ENCODE measurements at regions of chr7 and their contacts with region 1.

Region 1: DNA sequence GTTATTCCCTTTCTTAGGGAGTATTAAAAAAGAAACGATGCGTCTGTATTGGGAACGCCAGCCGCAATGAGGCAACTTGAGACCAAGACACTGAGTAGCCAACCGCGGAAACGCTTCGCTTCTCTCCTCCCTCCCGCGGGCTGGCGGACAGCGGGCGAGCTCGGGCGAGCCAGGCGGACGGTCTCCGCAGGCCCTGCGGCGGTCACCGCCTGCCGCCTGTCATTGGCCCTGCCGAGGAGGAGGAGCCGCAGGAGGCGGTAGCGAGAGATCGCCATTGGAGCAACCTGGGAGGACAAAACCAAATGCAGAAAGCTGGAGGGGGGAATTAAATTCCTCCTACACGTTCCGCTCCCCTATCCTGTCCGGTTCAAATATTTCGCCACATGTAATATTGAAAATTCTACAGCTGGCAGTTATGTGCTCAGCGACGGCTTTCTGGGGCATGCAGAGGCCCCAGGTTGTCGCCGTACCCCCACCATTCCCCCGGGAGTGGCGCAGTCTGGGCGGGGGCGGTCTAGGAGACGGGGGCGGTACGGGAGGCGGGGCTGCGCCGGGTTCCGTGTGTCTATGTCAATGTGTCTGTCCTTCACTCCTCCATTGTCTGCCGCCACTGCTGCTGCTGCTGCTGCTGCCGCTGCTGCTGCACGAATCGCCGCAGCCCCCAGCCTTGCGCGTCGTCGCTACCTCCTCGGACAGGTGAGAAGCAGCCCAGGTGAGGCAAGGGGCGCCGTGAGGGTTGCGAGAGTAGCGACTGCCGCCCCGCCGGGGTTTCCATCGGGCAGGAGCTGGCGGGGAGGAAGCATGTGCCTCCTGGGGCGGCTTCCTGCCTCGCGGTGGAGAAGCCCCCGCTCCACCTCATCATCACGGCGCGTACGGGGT is at the starts of genes ANKMY2 and BZW2:
- DNase-seq: peak; percentile 89 to 96 (median 94)
- H3K4me3 ChIP-seq: peak within 1 kb of the TSS; percentile 58 to 100 (median 94)
- H3K27ac ChIP-seq: peak within 1 kb of the TSS; percentile 86 to 100 (median 97)
- H3K27me3 ChIP-seq: no peaks in the 10 kb centered on the region
- CTCF ChIP-seq: peak in 33 of 56 donors; percentile 6 to 53 (median 26)
- total RNA-seq, gene ANKMY2: 19.4 to 57.2 (median 37.9) TPM
- total RNA-seq, gene BZW2: 10.3 to 36.8 (median 24.1) TPM

Region 2: DNA sequence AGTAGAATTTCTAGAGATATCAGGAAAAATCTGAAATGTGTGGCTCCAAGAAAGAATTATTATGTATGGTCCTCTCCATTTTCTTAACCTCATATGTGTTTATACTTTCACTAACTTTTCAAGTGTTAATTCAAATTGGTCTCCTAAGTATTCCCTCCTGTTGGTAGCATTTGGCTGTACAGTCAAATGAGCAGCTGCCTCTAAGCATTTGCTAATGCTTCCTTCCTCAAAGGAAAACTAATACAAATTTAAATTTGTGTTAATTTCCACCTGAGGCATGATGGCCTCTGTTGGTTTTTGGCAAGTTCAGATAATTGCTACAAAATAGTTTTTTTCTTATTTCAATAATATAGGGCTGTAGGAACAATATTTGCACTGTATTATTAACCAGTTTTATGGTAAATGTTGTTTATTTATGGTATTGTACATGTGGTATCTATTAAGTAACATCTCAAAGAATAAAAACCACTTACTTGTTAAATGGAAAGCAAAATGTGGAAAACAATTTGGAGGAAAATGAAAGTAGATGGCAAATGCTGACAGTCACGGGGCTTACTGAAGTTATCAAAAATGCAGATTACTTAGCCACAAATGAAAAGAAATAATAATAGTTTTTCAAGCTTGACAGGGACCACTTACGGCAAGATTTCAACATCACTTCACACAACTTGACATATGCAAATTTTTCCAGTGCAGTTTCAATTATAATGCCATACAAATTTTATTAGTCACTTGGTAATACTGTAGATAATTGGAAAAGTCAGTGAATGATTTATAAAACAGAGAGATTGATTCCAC is 660.0 kb before region 1 on chr7:
- intact Hi-C with region 1: no loop called
- DNase-seq: no peak
- H3K4me3 ChIP-seq: no peak overlapping the region
- H3K27ac ChIP-seq: no peak overlapping the region
- H3K27me3 ChIP-seq: no peaks in the 10 kb centered on the region
- CTCF ChIP-seq: no peak

Region 3: DNA sequence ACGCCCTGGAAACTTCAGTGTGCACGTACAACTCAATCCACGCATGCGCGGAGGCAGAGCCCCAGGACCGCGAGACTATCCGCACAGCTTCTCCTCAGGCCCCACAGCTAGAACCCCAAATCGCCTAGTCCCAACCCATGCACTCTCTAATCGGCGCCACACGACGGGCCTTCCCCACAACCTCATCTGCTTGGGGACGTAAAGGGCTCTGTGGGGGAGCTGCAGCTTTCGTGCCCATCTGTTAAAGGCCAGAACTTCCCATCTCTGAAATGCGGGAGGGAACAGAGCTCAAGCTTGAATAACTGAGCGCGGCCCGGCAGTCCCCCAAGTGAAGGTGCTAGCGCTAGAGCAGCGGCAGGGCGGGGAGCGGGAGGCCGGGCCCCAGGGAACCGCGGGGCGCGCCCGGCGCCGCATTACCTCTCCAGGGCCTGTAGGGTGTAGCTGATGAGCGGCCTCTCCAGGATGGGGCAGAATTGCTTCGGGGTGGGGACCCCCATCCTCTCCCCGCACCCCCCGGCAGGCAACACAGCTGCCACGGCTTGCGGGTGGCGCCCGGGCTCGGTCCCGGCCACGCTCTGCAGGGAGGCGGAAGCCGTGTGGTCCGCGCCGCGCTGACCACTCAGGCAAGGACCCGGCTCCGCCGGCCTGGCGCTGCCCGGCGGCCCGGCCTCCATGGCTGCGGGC is 225.0 kb before region 1 on chr7:
- intact Hi-C with region 1: loop called (anchors 2 to 5 kb)
- DNase-seq: peak; percentile 77 to 90 (median 87)
- H3K4me3 ChIP-seq: peak overlapping the region; percentile 41 to 88 (median 77)
- H3K27ac ChIP-seq: peak overlapping the region; percentile 92 to 100 (median 98)
- H3K27me3 ChIP-seq: no peaks in the 10 kb centered on the region
- CTCF ChIP-seq: peak in 29 of 56 donors; percentile 3 to 45 (median 25)